GM10248 (cell line): ENCODE measurements at regions of chr5 and their contacts with region 1.

Region 1: DNA sequence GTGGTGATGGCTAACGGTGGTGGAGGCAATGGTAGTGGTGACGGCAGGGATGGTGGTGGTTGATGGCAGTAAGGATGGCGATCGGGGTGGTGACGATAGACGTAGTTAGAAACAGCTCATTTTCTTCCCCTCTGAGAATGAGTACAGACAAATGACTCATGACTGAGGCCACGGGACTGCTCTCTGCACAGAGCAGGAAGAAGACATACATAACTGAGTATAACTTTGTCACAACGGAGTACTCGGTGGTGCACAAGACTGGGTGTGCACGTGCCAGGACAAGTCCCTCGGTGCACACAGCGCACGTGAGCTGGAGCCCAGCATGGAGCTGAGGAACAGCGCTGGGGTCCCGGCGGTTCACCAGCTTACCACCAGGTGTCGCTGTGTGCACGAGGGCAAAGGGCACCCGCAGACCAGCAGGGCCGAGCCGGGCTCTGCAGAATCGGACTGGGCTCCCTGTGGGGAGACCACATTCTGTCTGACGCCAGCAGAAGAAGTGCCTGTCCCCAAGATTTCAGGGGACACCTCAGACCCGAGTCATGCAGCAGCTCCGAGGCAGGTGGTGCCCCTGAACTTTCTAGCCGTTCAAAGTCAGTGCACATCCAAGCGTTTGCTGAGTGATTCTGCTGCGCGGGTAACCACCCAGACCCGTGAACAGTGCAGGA is 188.6 kb downstream of the FSTL4 start:
- DNase-seq: peak; percentile 81
- CTCF ChIP-seq: peak; percentile 88

Region 2: DNA sequence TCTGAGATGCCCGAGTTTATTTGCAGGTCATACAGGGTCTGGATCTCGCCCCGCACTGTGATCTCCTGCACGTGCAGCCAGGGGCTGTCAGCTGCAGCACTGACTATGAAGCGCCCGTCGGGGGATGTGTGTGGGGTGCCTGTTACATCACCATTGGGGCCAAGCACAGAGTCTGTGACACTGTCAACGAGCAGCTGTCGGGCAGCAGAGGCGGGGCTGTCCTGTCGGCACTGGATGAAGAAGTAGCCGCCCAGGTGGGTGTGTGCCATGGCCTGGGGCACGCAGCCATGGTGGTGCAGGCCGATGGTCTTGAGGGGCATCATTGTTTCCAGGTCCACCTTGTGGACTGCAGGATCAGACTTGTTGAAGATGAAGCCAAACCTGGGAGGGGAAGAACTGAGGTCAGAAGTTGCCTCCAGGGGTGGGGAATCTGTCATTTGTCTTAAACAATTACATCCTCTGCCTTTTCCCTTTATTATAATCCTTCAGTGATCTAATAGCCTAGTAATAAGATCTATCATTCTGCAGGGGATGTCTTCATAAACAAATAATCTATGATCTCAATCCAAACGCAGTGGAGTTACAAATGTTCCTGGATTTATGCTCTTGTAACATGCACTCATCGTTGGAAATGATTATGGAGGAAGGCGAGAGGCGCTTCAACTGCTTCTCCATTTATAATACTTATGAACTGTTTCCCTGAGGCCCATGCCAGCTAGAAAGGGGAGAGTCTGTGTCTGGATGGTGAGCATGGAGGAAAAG is 224.2 kb before region 1 on chr5:
- CTCF ChIA-PET with region 1: no interaction called
- POLR2A ChIA-PET with region 1: no interaction called
- DNase-seq: no peak
- CTCF ChIP-seq: no peak

Region 3: DNA sequence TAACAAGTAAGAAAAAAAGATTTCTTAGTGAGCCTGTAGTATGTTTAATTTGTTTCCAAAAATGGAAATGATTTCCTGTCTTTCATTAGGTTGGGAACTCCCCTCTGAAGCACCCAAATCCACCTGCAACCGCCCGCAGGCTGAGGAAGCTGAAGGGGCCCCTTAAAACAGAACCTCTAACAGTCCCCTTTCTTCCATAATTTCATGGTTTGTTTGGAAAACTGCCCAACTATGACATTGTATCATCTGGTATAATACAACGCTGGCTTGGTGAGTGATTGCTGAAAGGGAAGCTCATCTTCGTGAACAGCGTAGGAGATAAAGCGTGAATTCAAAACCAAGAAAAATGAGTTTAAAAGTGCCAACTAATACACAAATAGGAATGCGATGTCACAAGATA is 26.9 kb before region 1 on chr5:
- CTCF ChIA-PET with region 1: interaction called, 28 read pairs
- POLR2A ChIA-PET with region 1: no interaction called
- DNase-seq: no peak
- CTCF ChIP-seq: no peak

Region 4: DNA sequence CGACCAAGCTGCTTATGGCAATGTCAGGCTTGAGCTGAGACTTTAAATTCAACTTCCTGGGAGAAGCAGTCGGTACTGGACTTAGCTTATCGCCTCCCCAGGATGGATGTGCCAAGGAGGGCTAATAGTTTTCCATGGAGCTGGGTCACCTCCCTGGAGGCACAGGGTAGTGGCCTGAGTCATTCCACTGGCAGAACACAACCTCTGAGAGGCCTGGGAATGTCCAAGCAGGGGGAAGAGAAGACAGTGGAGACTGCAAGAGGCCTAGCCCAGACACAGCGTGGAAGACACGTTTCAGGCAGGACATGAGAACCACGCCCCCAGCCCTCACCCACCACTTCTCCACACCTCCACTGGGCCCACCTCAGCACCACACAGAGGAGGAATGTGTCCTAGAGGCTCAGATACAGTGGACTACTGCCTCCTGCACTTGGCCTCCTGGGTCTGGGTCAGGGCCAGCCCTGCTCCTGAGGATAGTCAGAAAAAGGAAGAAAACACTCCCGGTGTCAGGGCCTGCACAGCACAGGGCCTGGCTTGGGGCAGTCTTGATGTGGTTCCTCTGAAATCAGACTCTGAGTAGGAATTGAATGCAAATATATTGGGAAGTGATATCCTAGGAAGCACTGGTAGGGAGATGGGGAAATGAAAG is 16.8 kb after region 1 on chr5:
- CTCF ChIA-PET with region 1: interaction called, 51 read pairs
- POLR2A ChIA-PET with region 1: no interaction called
- DNase-seq: no peak
- CTCF ChIP-seq: no peak

Region 5: DNA sequence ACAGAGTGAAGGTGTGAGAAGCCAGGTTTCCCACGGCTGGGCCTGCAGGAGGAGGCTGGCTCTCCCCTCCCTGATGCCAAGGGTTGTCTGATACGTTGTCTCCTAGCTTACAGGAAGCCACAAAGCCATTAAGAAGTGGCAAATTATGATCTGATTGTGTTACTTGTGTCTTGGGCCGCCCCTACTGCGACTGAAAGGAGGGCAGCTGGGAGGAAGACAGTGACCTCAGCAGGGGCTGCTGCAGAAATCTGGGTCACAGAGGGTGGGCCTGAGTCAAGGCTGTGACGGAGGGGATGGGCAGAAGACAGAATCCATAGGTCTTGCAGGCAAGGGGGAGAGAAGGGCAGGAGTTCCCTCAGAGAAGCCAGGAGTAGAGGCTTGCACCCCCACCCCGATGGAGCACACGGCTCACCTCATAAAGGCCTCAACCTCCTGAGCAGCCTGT is 43.6 kb after region 1 on chr5:
- CTCF ChIA-PET with region 1: interaction called, 11 read pairs
- POLR2A ChIA-PET with region 1: no interaction called
- DNase-seq: no peak
- CTCF ChIP-seq: no peak

Region 6: DNA sequence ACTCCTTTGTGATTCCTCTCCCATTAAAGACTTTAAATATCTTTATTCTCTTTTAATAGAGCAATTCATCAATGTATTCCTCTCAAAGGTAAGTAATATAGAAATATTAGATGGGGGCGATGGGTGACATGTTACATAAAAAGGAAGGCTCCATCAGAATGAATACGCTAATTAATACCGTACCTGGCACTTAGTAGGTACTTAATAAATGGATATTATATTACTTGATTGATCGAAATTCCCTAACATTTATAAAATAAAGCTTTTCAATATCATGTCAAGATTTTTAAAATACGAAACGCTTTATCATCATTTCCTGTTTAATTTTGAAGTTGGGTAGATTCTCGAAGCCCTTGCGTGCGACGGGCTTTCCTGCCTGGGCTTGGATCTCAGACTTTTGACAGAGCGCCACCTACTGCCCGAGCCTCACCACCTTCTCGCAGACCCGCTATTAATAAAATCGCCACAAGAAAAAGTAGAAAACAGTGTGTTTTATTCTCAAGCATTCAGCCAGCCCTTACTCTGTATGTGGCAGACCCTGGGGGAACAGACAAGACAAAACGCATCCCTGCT is 445.3 kb after region 1 on chr5:
- CTCF ChIA-PET with region 1: interaction called, 10 read pairs
- POLR2A ChIA-PET with region 1: no interaction called
- DNase-seq: peak; percentile 77
- CTCF ChIP-seq: peak; percentile 70